ENCODE measurements at regions of chr2 and their contacts with region 1.

Region 1: DNA sequence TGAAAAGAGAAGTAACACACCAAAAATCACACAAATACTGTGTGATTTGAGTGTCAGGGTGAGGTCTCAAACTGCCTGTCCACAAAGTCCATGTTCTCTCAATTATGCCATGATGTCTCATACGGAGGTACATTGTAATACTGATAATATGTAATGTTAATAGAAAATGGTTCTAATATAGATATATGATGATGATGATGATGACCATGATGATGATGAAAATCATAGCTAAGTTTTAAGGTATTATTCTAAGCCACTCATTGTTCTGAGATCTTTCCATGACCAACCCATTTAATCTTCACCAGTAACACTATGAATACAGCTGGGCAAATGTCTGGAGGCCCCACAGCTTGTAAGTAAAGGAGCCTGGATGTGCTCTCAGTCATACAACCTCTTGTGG is 196.3 kb upstream of the KLHL29 start:
- DNase-seq: no peak
- ATAC-seq: no peak
- H3K4me3 ChIP-seq: no peak overlapping the region
- H3K27ac ChIP-seq: no peak overlapping the region
- H3K4me1 ChIP-seq: no peaks in the 10 kb centered on the region
- H3K27me3 ChIP-seq: peaks cover 0 to 4% of the 10 kb centered on the region in 2 experiments; a peak in 2 of 4 replicates
- CTCF ChIP-seq: no peak
- EP300 ChIP-seq: no peak
- POLR2A ChIP-seq: no peak
- RAD21 ChIP-seq: no peak

Region 2: DNA sequence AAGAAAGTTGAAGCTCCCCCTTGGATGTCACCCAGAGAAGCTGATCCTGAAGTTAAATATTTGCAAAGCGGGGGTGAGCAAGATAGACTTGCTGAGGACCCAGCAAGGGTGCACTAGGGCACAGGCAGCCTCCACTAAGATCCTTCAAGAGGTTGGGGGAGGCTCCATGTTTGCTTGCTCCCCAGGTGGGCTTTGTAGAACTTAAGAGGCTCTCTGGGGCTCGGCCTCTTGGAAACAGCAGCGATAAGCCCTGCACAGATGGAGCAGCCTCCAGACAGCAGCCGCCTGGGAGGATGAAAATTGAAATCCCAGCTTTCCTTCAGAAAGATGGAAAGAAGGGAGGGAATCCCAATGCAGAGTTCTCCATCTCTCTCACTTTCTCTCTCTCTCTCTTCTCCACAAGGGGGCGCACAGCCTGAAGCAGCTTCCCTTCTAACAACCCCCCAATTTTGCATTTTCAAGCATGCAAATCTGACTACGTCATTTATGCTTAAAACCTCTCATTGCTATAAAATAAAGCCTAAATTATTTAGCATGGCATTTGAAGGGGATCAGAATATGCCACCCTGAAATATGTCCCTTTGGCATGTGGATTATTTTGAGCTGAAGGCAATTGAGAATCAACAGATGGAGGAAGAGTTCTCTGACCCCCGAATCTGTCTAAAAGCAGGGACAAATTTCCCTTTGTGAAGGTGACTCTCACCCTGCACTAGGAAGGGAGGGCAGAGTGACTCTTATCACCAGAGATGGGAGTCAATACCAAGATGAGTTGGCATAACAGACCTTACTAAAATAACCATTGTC is 10.7 kb after region 1 on chr2:
- CTCF ChIA-PET with region 1: interaction called, 11 read pairs
- POLR2A ChIA-PET with region 1: no interaction called
- RAD21 ChIA-PET with region 1: interaction called, 3 read pairs
- SMC1A ChIA-PET with region 1: interaction called, 4 read pairs
- in situ Hi-C with region 1: no loop called
- intact Hi-C with region 1: no loop called
- DNase-seq: no peak
- ATAC-seq: peak; percentile 72
- H3K4me3 ChIP-seq: no peak overlapping the region
- H3K27ac ChIP-seq: no peak overlapping the region
- H3K4me1 ChIP-seq: no peaks in the 10 kb centered on the region
- H3K27me3 ChIP-seq: no peaks in the 10 kb centered on the region
- CTCF ChIP-seq: peak; percentile 53 to 73 (median 72)
- EP300 ChIP-seq: no peak
- POLR2A ChIP-seq: no peak
- RAD21 ChIP-seq: peak; percentile 27; the same call in 1 of the 2 replicates

Measured in GM12878 (cell line).